ENCODE measurements at regions of chr1 and their contacts with region 1.

Region 1: DNA sequence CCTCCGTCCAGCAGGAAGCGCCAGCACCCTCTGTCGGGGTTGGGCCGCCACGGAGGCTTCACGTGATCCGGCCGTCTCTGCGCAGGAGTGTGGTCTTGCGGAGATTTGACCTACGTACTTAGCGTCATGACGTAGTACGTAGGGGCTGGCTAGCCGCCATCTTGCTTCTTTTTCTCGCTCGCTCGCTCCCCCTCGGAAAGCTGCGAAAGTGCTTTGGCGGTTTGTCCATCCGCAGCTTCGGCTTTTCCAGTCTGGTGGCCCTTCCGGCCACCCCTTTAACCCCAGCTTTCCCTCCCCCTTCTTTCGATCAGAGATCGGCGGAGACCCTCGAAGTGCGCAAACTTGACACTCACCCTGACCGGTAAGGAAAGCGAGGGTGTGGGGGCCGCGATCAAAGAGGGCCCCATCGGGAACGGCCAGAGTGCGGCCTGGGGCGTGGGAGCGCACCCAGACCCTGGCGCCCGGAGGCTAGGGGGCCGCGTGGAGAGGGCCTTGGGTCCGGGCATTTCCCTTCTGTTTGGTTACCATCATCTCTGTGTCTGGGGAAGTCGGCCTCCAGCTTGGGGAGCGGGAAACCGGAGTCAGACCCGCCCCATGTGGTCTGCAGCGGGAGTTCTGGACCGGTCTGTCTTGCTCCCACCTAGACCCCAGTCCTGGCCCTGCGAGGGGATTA is at the start of gene PRRC2C:
- DNase-seq: peak; percentile 97
- ATAC-seq: peak; percentile 90
- H3K4me3 Mint-ChIP-seq: peak within 1 kb of the TSS; percentile 88
- H3K27ac Mint-ChIP-seq: peak within 1 kb of the TSS; percentile 91
- H3K4me1 Mint-ChIP-seq: peaks cover 45% of the 10 kb centered on the region
- H3K27me3 Mint-ChIP-seq: no peaks in the 10 kb centered on the region
- total RNA-seq, gene PRRC2C: 225 to 244 TPM

Region 2: GRCh38 chr1:171267391-171267790 is 218.1 kb before region 1 on chr1:
- CTCF ChIA-PET with region 1: no interaction called
- DNase-seq: no peak
- ATAC-seq: no peak
- H3K4me3 Mint-ChIP-seq: no peak overlapping the region
- H3K27ac Mint-ChIP-seq: no peak overlapping the region
- H3K4me1 Mint-ChIP-seq: no peaks in the 10 kb centered on the region
- H3K27me3 Mint-ChIP-seq: peaks cover 25% of the 10 kb centered on the region

Region 3: DNA sequence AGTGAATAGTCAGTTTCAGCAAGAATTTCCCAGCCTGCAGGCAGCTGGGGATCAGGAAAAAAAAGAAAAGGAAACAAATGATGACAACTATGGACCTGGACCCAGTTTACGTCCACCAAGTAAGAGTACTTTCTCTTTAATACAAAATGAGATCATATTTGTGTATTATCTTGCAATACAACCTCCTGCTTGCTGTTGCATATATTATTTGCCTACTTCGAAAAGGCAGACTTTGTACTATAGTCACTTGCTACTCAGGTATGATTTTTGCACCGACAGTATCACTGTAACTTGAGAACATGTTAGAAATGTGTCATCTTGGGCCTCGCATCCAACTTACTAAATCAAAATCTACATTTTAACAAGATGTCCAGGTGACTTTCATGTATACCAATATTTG is 30.2 kb after region 1 on chr1:
- CTCF ChIA-PET with region 1: interaction called, 12 read pairs
- DNase-seq: no peak
- ATAC-seq: no peak
- H3K4me3 Mint-ChIP-seq: no peak overlapping the region
- H3K27ac Mint-ChIP-seq: no peak overlapping the region
- H3K4me1 Mint-ChIP-seq: peaks cover 53% of the 10 kb centered on the region
- H3K27me3 Mint-ChIP-seq: no peaks in the 10 kb centered on the region

Region 4: DNA sequence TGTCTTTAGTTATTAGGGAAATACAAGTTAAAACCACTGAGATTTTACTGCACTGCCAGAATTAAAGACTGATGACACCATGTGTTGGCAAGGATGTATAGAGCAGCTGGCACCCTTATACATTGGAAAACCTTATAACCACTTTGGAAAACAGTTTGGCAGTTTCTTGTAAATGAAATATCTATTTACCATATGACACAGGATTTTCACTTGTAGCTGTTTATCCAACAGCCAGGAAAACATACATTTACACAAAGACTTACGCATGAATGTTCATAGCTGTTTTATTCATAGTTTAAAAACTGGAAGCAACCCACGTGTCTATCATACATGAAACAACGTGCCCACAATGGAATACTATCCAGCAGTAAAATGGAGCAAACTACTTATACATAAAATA is 45.2 kb after region 1 on chr1:
- CTCF ChIA-PET with region 1: interaction called, 14 read pairs
- DNase-seq: no peak
- ATAC-seq: no peak
- H3K4me3 Mint-ChIP-seq: no peak overlapping the region
- H3K27ac Mint-ChIP-seq: no peak overlapping the region
- H3K4me1 Mint-ChIP-seq: no peaks in the 10 kb centered on the region
- H3K27me3 Mint-ChIP-seq: no peaks in the 10 kb centered on the region

Region 5: GRCh38 chr1:171741872-171742576 is 256.5 kb after region 1 on chr1 and contains the start of gene VAMP4:
- CTCF ChIA-PET with region 1: interaction called, 10 read pairs
- DNase-seq: peak; percentile 90
- ATAC-seq: peak; percentile 96
- H3K4me3 Mint-ChIP-seq: peak within 1 kb of the TSS; percentile 97
- H3K27ac Mint-ChIP-seq: peak within 1 kb of the TSS; percentile 98
- H3K4me1 Mint-ChIP-seq: peaks cover 46% of the 10 kb centered on the region
- H3K27me3 Mint-ChIP-seq: no peaks in the 10 kb centered on the region
- total RNA-seq, gene VAMP4: 12.5 to 16.9 TPM